K562 (cell line): ENCODE measurements at regions of chr17 and their contacts with region 1.

Region 1: GRCh38 chr17:63406689-63407330 is 39.3 kb downstream of the CYB561 start:
- DNase-seq: peak; percentile 70 to 93 (median 78)
- ATAC-seq: peak; percentile 98
- H3K4me3 ChIP-seq: no peak overlapping the region
- H3K27ac ChIP-seq: no peak overlapping the region
- H3K4me1 ChIP-seq: peaks cover 3 to 4% of the 10 kb centered on the region in 2 experiments; a peak in 3 of 5 replicates
- H3K27me3 ChIP-seq: no peaks in the 10 kb centered on the region
- CTCF ChIP-seq: peak; percentile 87 to 95 (median 89)
- EP300 ChIP-seq: no peak
- POLR2A ChIP-seq: no peak
- RAD21 ChIP-seq: peak; percentile 83 to 93

Region 2: DNA sequence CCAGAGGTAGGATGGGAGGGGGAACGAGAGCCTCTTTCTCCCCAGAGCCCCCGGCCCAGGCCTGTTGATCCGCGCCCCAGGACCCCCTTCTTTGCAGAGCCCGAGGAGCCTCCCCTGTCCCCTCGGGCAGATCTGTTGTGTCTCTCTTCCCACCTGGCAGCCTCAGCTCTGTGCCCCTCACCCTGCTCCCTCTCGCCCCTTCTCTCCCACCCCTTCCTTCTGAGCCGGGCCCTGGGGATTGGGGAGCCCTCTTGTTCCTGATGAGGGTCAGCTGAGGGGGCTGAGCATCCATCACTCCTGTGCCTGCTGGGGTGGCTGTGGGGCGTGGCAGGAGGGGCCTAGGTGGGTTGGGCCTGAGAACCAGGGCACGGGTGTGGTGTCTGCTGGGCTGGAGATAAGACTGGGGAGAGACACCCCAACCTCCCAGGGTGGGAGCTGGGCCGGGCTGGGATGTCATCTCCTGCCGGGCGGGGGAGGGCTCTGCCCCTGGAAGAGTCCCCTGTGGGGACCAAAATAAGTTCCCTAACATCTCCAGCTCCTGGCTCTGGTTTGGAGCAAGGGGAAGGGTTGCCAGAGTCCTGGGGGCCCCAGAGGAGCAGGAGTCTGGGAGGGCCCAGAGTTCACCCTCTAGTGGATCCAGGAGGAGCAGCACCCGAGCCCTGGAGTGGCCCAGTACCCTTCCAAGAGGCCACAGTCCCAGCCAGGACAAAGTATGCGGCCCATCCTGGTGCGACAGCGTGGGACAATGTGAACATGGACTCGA is 713.9 kb before region 1 on chr17:
- CTCF ChIA-PET with region 1: no interaction called
- POLR2A ChIA-PET with region 1: no interaction called
- in situ Hi-C with region 1: loop called (anchors 25 kb)
- intact Hi-C with region 1: no loop called
- DNase-seq: peak; percentile 90 to 95 (median 93)
- ATAC-seq: peak; percentile 91
- H3K4me3 ChIP-seq: no peak overlapping the region
- H3K27ac ChIP-seq: peak overlapping the region; percentile 30
- H3K4me1 ChIP-seq: peaks cover 29 to 57% of the 10 kb centered on the region in 2 experiments; a peak in 4 of 5 replicates
- H3K27me3 ChIP-seq: no peaks in the 10 kb centered on the region
- CTCF ChIP-seq: peak; percentile 58 to 75 (median 68)
- EP300 ChIP-seq: peak; percentile 47; the same call in 1 of the 2 replicates
- POLR2A ChIP-seq: no peak
- RAD21 ChIP-seq: peak; percentile 33 to 60; a peak in 3 of 4 replicates

Region 3: GRCh38 chr17:62995377-62995885 is 411.4 kb before region 1 on chr17:
- CTCF ChIA-PET with region 1: interaction called, 9 read pairs
- POLR2A ChIA-PET with region 1: no interaction called
- in situ Hi-C with region 1: no loop called
- intact Hi-C with region 1: loop called (anchors 1 kb)
- DNase-seq: peak; percentile 46 to 73 (median 56)
- ATAC-seq: peak; percentile 98
- H3K4me3 ChIP-seq: no peak overlapping the region
- H3K27ac ChIP-seq: peak overlapping the region; percentile 68
- H3K4me1 ChIP-seq: peaks cover 0 to 8% of the 10 kb centered on the region in 2 experiments; a peak in 1 of 5 replicates
- H3K27me3 ChIP-seq: no peaks in the 10 kb centered on the region
- CTCF ChIP-seq: peak; percentile 63 to 74 (median 73); a peak in 5 of 6 replicates
- EP300 ChIP-seq: no peak
- POLR2A ChIP-seq: no peak
- RAD21 ChIP-seq: peak; percentile 57 to 76

Region 4: DNA sequence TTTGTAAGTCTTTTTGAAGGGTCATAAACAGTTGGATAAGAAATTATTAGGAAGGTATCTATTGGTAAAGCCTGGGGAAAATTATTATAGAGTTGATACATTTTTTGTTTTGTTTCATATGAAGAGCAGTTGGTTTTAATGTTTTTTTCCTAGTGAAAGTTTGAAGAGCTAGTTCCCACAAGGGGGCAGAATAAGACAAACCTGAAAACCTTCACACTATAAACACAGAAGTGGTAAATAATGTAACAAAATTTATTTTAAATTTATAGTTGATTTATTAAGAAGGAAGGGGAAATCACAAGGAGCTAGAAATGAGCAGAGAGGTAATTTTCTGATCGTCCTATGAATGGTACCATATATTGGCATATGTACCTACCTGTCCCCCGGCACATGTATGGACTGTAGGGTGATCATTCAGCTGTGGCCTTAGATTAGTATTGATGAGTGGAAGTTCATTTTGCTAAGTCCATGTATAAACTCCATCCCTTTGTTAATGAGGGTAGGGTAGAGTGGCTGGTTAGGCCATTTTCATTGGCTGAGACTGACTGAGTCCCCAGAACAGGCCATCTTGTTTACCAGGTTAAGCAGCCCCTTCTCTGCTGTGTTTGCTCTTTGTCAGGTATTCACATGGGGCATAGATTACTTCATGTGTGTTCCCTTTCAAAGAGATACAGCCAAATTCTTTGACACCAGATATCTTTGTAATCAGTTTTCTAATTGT is 324.4 kb before region 1 on chr17:
- CTCF ChIA-PET with region 1: interaction called, 40 read pairs
- POLR2A ChIA-PET with region 1: no interaction called
- in situ Hi-C with region 1: loop called (anchors 10 kb)
- intact Hi-C with region 1: loop called (anchors 1 kb)
- DNase-seq: peak in 1 of 4 experiments; percentile 26
- ATAC-seq: no peak; the same call in 2 of the 3 replicates
- H3K4me3 ChIP-seq: no peak overlapping the region
- H3K27ac ChIP-seq: no peak overlapping the region
- H3K4me1 ChIP-seq: no peaks in the 10 kb centered on the region
- H3K27me3 ChIP-seq: no peaks in the 10 kb centered on the region
- CTCF ChIP-seq: peak; percentile 9 to 56 (median 34); a peak in 3 of 6 replicates
- EP300 ChIP-seq: no peak
- POLR2A ChIP-seq: no peak
- RAD21 ChIP-seq: peak; percentile 62 to 67

Region 5: GRCh38 chr17:63222655-63223054 is 184.2 kb before region 1 on chr17:
- CTCF ChIA-PET with region 1: no interaction called
- POLR2A ChIA-PET with region 1: no interaction called
- in situ Hi-C with region 1: no loop called
- intact Hi-C with region 1: loop called (anchors 10 kb)
- DNase-seq: no peak
- ATAC-seq: no peak
- H3K4me3 ChIP-seq: no peak overlapping the region
- H3K27ac ChIP-seq: no peak overlapping the region; the same call in 2 of the 3 replicates
- H3K4me1 ChIP-seq: no peaks in the 10 kb centered on the region
- H3K27me3 ChIP-seq: no peaks in the 10 kb centered on the region
- CTCF ChIP-seq: no peak; a peak in 1 of 6 replicates
- EP300 ChIP-seq: no peak
- POLR2A ChIP-seq: no peak
- RAD21 ChIP-seq: no peak